Dorsolateral prefrontal cortex (tissue), 120 donors: ENCODE measurements at regions of chr16 and their contacts with region 1.

Region 1: DNA sequence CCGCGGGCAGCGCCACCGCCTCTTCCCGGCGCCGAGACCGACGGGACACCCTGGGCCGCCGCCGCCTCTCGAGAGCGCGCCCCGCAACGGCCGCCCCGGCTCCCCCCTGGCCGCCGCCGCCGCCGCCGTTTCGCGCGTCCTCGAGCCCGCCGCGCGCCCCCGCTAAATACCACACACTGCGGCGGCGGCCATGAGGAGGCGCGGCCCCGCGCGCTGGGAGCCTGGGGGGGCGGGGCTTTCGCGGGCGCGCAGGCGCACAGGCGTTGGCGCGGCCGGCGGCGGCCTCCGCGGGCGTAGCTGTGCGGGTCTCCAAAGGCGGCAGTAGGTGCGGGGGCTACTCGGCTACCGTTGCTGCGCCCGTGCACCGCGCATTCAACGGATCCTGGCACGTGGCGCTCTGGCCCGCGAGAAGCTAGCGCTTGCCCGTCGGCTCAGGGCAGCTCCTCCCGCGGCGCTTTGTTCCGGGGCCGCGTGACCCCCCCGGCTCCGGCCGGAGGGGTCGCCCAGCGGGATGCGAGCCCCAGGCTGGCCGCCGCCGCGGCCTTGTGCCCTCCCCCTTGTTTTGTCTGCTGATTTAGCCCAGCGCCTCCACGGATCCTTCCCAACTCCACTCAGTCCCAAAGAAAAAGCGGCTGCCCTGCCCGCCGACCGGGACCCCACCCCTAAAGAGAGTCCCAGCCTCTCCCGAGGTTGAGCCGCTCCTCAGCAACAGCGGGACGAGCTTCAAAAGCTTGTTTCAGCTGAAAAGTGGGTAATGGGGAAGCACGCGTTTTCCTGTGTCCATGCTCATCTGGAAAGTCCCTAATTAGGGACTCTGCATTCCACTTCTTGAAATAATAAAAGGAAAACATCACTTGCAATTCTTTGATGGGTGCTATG is at the start of gene SIAH1:
- DNase-seq: peak; percentile 75 to 91 (median 80)
- H3K4me3 ChIP-seq: peak within 1 kb of the TSS; percentile 61 to 97 (median 88)
- H3K27ac ChIP-seq: peak within 1 kb of the TSS; percentile 86 to 100 (median 98)
- H3K27me3 ChIP-seq: no peaks in the 10 kb centered on the region
- CTCF ChIP-seq: peak in 11 of 56 donors; percentile 7 to 32 (median 11)
- total RNA-seq, gene SIAH1: 20.1 to 37.6 (median 27.7) TPM

Region 2: DNA sequence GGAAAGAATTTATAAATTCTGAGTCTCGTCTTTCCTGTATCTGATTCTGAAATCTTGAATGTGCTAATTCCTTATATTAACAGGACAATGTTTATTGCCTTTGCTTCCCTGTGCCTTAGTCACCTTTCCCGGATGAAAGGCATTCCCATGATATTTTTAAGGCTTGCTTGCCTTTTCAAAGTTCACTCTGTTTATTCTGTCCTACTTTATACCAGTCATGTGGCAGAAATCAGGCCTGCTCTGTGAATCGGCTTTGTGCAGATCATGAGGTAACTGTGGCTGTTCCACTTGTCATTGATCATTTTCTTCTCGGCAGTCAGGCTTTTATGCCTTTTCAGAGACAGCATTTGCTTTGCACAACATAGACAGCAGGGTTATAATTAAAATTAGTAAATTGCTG is 109.4 kb before region 1 on chr16:
- intact Hi-C with region 1: loop called (anchors 10 kb)
- DNase-seq: peak in 5 of 10 donors; percentile 11 to 62 (median 46)
- H3K4me3 ChIP-seq: peak overlapping the region in 30 of 59 donors; percentile 1 to 37 (median 13)
- H3K27ac ChIP-seq: peak overlapping the region; percentile 38 to 96 (median 89)
- H3K27me3 ChIP-seq: no peaks in the 10 kb centered on the region
- CTCF ChIP-seq: peak in 1 of 56 donors; percentile 12

Region 3: GRCh38 chr16:48365581-48366164 is 19.8 kb before region 1 on chr16:
- intact Hi-C with region 1: loop called in 1 of 2 experiments (anchors 2 kb)
- DNase-seq: peak; percentile 68 to 91 (median 86)
- H3K4me3 ChIP-seq: peak overlapping the region; percentile 41 to 75 (median 64)
- H3K27ac ChIP-seq: peak overlapping the region in 58 of 59 donors; percentile 11 to 88 (median 76)
- H3K27me3 ChIP-seq: no peaks in the 10 kb centered on the region
- CTCF ChIP-seq: peak in 28 of 56 donors; percentile 5 to 51 (median 24)

Region 4: DNA sequence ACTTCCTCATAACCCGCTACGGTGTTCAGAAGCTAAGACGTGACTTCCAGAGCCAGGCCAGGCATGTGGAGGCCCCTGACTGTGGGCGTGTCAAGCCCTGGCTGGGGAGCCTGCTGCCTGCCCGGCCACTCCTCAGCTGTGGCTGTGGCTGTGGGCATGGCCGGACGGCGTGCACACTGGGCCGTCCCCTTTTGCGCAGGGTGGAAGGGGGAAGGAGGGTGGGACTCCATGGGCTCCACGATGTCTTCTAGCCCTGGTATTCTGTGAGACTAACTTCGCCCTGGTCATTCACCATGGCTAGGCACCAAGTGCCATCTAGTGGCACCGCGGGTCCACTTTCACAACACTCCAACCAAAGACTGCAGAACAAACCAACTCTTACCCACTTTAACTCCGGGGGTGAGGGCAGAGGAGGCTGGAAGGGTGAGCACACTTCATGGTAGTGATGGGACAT is 156.5 kb after region 1 on chr16:
- intact Hi-C with region 1: loop called in 1 of 2 experiments (anchors 5 kb)
- DNase-seq: peak in 9 of 10 donors; percentile 53 to 80 (median 78)
- H3K4me3 ChIP-seq: no peak overlapping the region
- H3K27ac ChIP-seq: peak overlapping the region in 45 of 59 donors; percentile 3 to 72 (median 45)
- H3K27me3 ChIP-seq: no peaks in the 10 kb centered on the region
- CTCF ChIP-seq: peak; percentile 39 to 90 (median 78)

Region 5: GRCh38 chr16:48609652-48610029 is 224.1 kb after region 1 on chr16:
- intact Hi-C with region 1: loop called in 1 of 2 experiments (anchors 5 kb)
- DNase-seq: peak in 4 of 10 donors; percentile 36 to 57 (median 52)
- H3K4me3 ChIP-seq: peak overlapping the region; percentile 62 to 99 (median 93)
- H3K27ac ChIP-seq: peak overlapping the region in 58 of 59 donors; percentile 31 to 99 (median 94)
- H3K27me3 ChIP-seq: no peaks in the 10 kb centered on the region
- CTCF ChIP-seq: no peak

Region 6: GRCh38 chr16:49281843-49282642 is 896.5 kb after region 1 on chr16:
- intact Hi-C with region 1: loop called in 1 of 2 experiments (anchors 5 kb)
- DNase-seq: peak; percentile 82 to 96 (median 86)
- H3K4me3 ChIP-seq: peak overlapping the region; percentile 47 to 82 (median 70)
- H3K27ac ChIP-seq: peak overlapping the region in 33 of 59 donors; percentile 28 to 92 (median 79)
- H3K27me3 ChIP-seq: peaks cover 4 to 94% (median 71%) of the 10 kb centered on the region in 45 donors
- CTCF ChIP-seq: peak in 53 of 56 donors; percentile 12 to 75 (median 51)